Psoas muscle (tissue), 8 donors: ENCODE measurements at regions of chr3 and their contacts with region 1.

Region 1: DNA sequence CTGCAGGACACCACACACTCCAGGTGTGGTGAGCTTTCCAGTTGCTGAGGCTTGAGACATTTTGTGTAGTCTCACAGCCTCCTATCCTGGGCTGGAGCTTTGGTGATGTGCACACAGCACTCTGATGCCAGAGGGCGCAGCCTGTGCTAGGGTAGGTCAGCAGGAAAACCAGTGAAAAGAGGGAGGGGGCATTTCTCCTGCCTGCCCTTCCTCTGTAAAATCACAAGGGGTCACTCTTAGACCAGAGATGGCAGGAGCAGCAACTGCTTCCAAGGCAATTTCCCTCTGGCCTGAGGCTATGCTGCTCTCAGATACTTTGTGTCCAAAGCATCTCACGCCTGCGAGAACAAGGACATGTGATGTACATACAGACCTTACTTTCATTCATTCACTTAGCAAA is 16.5 kb upstream of the MUSTN1 start:
- DNase-seq: peak in 1 of 2 donors; percentile 64
- ATAC-seq: peak; percentile 36 to 51 (median 44)
- H3K4me3 ChIP-seq: no peak overlapping the region
- H3K27ac ChIP-seq: peak overlapping the region; percentile 25
- H3K4me1 ChIP-seq: peaks cover 34% of the 10 kb centered on the region
- H3K27me3 ChIP-seq: no peaks in the 10 kb centered on the region
- CTCF ChIP-seq: peak; percentile 66

Region 2: GRCh38 chr3:52739730-52740129 is 111.6 kb before region 1 on chr3:
- intact Hi-C with region 1: no loop called
- DNase-seq: no peak
- ATAC-seq: no peak
- H3K4me3 ChIP-seq: no peak overlapping the region
- H3K27ac ChIP-seq: no peak overlapping the region
- H3K4me1 ChIP-seq: no peaks in the 10 kb centered on the region
- H3K27me3 ChIP-seq: no peaks in the 10 kb centered on the region
- CTCF ChIP-seq: no peak

Region 3: DNA sequence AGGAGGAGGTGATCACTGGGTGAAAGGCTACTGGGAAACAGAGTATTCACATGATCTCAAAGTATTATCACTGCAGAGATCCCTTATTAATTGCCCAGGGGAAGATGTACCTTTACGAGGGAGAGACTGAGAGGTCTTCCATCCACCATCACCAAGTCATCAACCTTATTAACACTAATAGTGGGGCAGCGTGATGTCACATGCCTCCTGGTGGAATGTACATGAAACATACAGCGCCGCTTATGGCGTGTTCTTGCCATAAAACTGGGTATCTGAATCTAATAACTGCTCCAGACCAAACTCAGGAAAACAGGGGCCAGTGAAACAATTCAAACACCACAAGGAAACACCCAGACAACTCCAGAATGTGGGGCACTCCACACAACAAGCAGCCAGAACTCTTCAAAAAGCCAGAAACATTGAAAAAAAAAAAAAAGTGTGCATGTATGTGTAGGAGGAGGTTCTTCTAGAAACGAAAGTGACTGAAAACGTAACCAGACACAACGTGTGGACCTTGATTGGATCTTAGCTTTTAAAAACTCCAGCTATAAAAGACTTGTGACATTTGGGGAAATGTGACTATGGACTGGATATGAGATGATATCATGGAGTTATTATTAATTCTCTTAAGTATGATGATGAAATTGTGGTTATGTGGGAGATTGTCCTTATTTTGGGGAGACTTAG is 41.4 kb after region 1 on chr3:
- intact Hi-C with region 1: loop called in 1 of 2 experiments (anchors 5 kb)
- DNase-seq: no peak
- ATAC-seq: peak in 3 of 4 donors; percentile 29 to 61 (median 54)
- H3K4me3 ChIP-seq: peak overlapping the region; percentile 57
- H3K27ac ChIP-seq: peak overlapping the region; percentile 89
- H3K4me1 ChIP-seq: peaks cover 44% of the 10 kb centered on the region
- H3K27me3 ChIP-seq: no peaks in the 10 kb centered on the region
- CTCF ChIP-seq: no peak

Region 4: GRCh38 chr3:52934630-52935530 is 83.5 kb after region 1 on chr3:
- intact Hi-C with region 1: loop called (anchors 5 kb)
- DNase-seq: peak in 1 of 2 donors; percentile 24
- ATAC-seq: peak; percentile 71 to 95 (median 82)
- H3K4me3 ChIP-seq: no peak overlapping the region
- H3K27ac ChIP-seq: no peak overlapping the region
- H3K4me1 ChIP-seq: peaks cover 4% of the 10 kb centered on the region
- H3K27me3 ChIP-seq: no peaks in the 10 kb centered on the region
- CTCF ChIP-seq: peak; percentile 79

Region 5: DNA sequence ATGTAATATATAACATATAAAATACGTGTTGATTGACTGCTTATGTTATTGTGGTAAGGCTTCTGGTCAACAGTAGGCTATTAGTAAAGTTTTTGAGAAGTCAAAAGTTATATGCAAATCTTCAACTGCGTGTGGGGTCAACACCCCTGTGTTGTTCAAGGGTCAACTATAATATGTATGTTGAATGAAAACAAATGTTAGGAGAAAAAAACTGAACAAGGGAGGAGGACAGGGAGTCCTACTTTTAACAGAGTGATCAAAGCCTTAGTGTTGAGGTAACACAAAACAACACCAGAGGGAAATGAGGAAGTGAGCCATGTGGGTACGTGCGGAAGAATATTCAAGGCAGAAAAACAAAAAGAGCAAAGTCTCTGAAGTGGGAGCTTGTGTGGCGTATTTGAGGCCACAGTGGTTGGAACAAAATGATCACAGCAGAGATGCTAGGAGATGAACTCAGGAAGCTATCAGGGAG is 132.0 kb after region 1 on chr3:
- intact Hi-C with region 1: loop called (anchors 5 to 10 kb)
- DNase-seq: no peak
- ATAC-seq: no peak
- H3K4me3 ChIP-seq: no peak overlapping the region
- H3K27ac ChIP-seq: peak overlapping the region; percentile 56
- H3K4me1 ChIP-seq: peaks cover 33% of the 10 kb centered on the region
- H3K27me3 ChIP-seq: no peaks in the 10 kb centered on the region
- CTCF ChIP-seq: no peak

Region 6: DNA sequence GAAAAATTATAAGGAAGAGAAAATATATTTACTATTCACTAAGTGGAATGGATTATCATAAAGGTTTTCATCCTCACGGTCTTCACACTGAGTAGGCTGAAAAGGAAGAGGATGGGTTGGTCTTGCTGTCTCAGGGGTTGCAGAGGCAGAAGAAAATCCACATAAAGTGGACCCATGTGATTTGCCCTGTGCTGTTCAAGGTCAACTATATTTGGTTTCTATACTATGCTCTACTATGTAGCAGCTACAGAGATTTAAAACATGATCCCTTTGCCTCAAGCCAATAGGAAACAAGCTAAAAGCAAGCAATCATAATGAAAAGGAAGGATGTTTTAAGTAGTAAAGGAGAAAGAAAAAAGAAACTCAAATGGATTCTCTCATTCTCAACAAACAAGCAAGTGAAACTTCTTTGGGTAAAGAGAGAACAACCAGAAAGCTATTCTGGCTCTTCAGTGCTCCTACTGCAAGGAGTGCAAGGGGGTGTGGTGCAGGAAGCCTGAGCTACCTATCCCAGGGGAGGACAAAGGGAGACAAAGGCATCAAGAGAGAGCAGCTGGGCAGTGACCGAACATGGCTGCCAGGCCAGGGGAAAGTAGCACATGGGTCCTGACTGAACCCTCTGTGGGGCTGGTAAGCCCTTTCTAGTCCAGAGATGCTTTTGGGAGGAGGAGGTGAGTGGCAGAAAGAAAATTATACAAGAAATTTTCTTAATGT is 158.6 kb after region 1 on chr3:
- intact Hi-C with region 1: no loop called
- DNase-seq: no peak
- ATAC-seq: no peak
- H3K4me3 ChIP-seq: no peak overlapping the region
- H3K27ac ChIP-seq: no peak overlapping the region
- H3K4me1 ChIP-seq: peaks cover 18% of the 10 kb centered on the region
- H3K27me3 ChIP-seq: no peaks in the 10 kb centered on the region
- CTCF ChIP-seq: no peak

Region 7: GRCh38 chr3:53030619-53031449 is 179.5 kb after region 1 on chr3:
- intact Hi-C with region 1: no loop called
- DNase-seq: no peak
- ATAC-seq: no peak
- H3K4me3 ChIP-seq: no peak overlapping the region
- H3K27ac ChIP-seq: no peak overlapping the region
- H3K4me1 ChIP-seq: peaks cover 9% of the 10 kb centered on the region
- H3K27me3 ChIP-seq: no peaks in the 10 kb centered on the region
- CTCF ChIP-seq: no peak

Region 8: DNA sequence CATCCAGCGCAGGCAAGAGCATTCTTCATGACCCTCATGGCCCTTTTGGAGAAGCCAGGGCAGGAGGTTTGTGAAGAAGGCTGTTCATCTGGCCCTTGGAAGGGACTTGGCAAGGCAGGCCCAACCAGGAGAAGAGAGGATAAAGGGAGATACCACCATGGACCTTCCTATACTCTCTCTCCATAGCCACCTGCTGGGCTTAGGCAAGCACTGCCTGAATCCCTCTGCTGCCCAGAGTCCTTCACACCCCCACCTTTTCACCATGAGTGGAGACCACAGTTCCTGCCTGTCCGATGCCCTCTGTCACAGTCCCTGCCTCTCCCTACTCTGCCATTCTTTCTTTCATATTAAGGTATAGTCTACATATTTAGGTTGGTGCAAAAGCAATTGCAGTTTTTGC is 205.1 kb after region 1 on chr3:
- intact Hi-C with region 1: no loop called
- DNase-seq: no peak
- ATAC-seq: peak in 1 of 4 donors; percentile 42
- H3K4me3 ChIP-seq: no peak overlapping the region
- H3K27ac ChIP-seq: no peak overlapping the region
- H3K4me1 ChIP-seq: no peaks in the 10 kb centered on the region
- H3K27me3 ChIP-seq: no peaks in the 10 kb centered on the region
- CTCF ChIP-seq: peak; percentile 13

Region 9: GRCh38 chr3:53072653-53073552 is 221.6 kb after region 1 on chr3:
- intact Hi-C with region 1: loop called (anchors 2 to 5 kb)
- DNase-seq: peak; percentile 85 to 89
- ATAC-seq: peak; percentile 91 to 97 (median 94)
- H3K4me3 ChIP-seq: peak overlapping the region; percentile 81
- H3K27ac ChIP-seq: peak overlapping the region; percentile 50
- H3K4me1 ChIP-seq: peaks cover 13% of the 10 kb centered on the region
- H3K27me3 ChIP-seq: no peaks in the 10 kb centered on the region
- CTCF ChIP-seq: peak; percentile 90

Region 10: DNA sequence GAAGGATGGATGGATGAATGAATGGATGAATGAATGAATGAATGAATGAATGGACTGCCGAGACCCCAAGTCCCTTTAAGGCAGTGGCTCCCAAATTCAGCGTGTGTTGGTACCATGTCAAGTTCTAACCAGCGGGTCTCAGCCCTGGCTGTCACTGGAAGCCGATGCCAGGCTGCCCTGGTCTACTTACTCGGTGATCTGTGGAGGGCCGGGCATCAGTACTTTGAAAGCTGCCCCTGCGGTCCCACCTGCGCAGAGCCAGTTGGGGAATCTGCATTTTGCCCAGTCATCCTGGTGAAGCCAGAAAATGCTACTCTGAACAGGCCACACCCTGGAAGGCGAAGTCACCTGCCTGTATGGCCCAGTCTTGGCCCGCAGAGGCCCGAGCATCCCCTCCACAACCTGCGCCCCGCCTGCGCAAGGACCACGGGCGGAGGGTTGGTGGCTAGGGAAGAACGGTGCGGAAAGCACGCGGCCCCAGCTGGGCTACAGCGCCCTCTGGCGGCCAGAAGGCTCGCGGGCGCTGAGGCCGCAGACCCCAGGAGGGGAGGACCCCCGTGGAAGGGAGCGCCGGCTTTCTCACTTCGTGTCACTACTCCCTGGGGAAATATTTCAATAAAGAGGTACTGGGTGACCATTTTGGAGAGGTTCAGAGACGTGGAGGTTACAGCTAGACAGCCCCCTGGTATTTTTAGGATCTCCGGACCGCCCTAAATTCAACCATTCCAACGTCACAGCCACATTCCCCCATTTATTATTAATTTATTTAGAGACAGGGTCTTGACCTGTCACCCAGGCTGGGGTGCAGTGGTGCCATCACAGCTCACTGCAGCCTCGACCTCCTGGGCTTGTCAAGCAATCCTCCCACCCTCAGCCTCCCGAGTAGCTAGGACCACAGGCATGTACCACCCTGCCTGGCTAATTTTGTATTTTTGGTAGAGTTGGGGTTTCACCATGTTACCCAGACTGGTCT is 344.5 kb after region 1 on chr3:
- intact Hi-C with region 1: loop called in 1 of 2 experiments (anchors 10 kb)
- DNase-seq: peak; percentile 55 to 76
- ATAC-seq: peak; percentile 74 to 95 (median 82)
- H3K4me3 ChIP-seq: no peak overlapping the region
- H3K27ac ChIP-seq: no peak overlapping the region
- H3K4me1 ChIP-seq: peaks cover 15% of the 10 kb centered on the region
- H3K27me3 ChIP-seq: no peaks in the 10 kb centered on the region
- CTCF ChIP-seq: peak; percentile 100